Esophagus muscularis mucosa (tissue), 4 donors: ENCODE measurements at regions of chr1 and their contacts with region 1.

Region 1: DNA sequence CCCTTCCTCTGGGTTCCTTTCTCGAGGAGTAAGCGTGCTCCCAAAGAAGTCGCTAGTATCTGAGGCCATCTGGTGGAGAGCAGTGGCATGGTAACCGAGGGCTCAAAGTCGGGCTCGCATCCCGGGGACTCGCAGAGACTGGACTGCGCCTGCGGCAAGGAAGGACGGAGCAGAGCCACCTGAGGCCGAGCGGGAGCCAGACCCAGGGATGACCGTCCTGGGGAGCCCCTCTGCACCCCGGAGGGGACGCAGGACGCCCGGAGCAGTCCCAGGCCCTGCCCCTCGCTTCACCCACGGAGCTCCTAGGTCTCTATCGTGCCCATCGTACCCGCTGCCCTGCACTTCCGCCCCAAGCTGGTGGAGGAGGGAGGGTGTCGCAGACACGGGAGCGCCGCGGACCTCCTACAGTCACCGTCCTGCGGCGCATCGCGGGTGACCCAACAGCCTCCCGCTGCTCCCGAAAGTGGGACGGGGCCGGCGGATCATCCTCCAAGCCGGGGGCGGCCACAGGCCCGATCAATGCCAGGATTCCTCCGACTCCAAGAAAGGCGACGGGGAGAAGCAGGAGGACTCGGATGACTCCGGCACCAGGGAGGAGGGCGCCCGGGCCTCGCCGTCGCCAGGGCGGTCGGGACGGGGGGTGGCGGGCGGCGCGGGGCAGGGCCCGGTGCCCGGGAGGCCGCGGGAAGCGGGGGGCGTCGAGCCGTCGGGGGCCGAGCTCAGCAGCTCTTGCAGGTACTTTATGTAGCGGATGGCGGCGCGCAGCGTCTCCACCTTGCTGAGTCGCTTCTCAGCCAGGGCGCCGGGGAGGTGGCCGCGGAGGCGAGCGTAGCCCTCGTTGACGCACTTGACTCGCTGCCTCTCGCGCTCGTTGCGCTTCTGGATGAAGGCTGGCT is 2.3 kb upstream of the CACNA1S start:
- DNase-seq: peak; percentile 96
- H3K4me3 ChIP-seq: peak overlapping the region; percentile 59 to 73 (median 70)
- H3K27ac ChIP-seq: peak overlapping the region; percentile 15 to 79 (median 68)
- H3K4me1 ChIP-seq: peaks cover 9 to 21% (median 18%) of the 10 kb centered on the region in 4 donors
- H3K27me3 ChIP-seq: peaks cover 0 to 16% (median 2%) of the 10 kb centered on the region in 4 donors
- CTCF ChIP-seq: peak; percentile 81 to 92 (median 83)
- EP300 ChIP-seq: no peak
- POLR2A ChIP-seq: no peak

Region 2: GRCh38 chr1:200971955-200972711 is 142.4 kb before region 1 on chr1:
- intact Hi-C with region 1: loop called (anchors 2 kb)
- DNase-seq: no peak
- H3K4me3 ChIP-seq: no peak overlapping the region
- H3K27ac ChIP-seq: no peak overlapping the region
- H3K4me1 ChIP-seq: peaks cover 0 to 9% (median 8%) of the 10 kb centered on the region in 4 donors
- H3K27me3 ChIP-seq: no peaks in the 10 kb centered on the region
- CTCF ChIP-seq: peak in 2 of 3 experiments; percentile 72 to 93
- EP300 ChIP-seq: no peak
- POLR2A ChIP-seq: no peak

Region 3: GRCh38 chr1:200982071-200982995 is 132.2 kb before region 1 on chr1:
- intact Hi-C with region 1: no loop called
- DNase-seq: no peak
- H3K4me3 ChIP-seq: no peak overlapping the region
- H3K27ac ChIP-seq: no peak overlapping the region
- H3K4me1 ChIP-seq: no peaks in the 10 kb centered on the region
- H3K27me3 ChIP-seq: no peaks in the 10 kb centered on the region
- CTCF ChIP-seq: no peak
- EP300 ChIP-seq: no peak
- POLR2A ChIP-seq: no peak

Region 4: GRCh38 chr1:201088902-201089525 is 25.5 kb before region 1 on chr1:
- intact Hi-C with region 1: loop called (anchors 1 kb)
- DNase-seq: no peak
- H3K4me3 ChIP-seq: no peak overlapping the region
- H3K27ac ChIP-seq: no peak overlapping the region
- H3K4me1 ChIP-seq: no peaks in the 10 kb centered on the region
- H3K27me3 ChIP-seq: peaks cover 0 to 16% (median 0%) of the 10 kb centered on the region in 4 donors
- CTCF ChIP-seq: no peak
- EP300 ChIP-seq: no peak
- POLR2A ChIP-seq: no peak

Region 5: DNA sequence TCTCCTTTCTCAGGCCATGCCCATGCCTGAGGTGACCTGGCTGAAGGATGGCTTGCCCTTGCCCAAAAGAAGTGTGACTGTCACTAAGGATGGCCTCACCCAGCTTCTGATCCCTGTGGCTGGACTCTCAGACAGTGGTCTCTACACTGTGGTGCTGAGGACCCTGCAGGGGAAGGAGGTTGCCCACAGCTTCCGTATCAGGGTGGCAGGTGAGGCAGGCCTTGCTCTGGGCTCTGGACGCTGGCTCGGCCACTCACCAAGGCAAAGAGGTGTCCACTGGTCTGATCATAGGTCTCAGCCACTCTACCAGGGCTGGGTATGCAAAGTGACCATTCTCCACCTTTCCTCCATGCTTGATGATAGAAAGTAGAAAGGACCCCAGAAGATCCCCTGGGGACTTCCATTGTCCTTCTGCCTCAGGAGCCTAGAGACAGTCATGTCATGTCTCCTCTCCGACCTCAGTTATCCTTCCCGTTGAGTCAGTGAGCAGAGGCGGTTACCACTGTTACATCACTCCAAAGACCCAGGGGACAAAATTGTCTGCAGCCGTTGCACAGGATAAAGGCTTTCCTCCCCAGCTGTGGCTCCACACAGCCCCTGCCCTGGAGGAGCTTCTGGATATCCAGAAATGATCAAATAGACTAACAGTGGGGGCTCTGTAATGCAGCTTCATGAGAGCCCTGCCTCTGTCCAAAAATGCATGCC is 110.3 kb after region 1 on chr1:
- intact Hi-C with region 1: loop called (anchors 5 kb)
- DNase-seq: peak; percentile 88
- H3K4me3 ChIP-seq: no peak overlapping the region
- H3K27ac ChIP-seq: no peak overlapping the region
- H3K4me1 ChIP-seq: no peaks in the 10 kb centered on the region
- H3K27me3 ChIP-seq: peaks cover 0 to 14% (median 0%) of the 10 kb centered on the region in 4 donors
- CTCF ChIP-seq: no peak
- EP300 ChIP-seq: no peak
- POLR2A ChIP-seq: no peak

Region 6: DNA sequence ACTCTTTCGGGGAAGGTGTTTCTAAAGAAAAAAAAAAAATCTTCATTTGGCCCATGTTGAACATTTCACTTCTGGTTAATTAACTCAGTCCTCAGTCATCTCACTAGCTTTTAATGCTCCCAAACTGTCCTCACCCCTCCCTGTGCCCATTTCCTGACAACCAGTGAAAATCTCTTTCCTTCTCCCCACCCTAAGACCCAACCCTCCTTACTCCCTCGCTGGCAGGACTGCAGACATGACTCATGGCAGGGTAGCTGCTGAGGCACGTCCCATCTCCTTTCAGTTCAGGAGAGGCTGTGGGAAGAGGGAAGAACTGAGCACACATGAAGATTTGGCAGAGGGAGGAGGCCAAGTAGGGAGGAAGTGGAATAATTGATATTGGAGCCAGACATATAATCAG is 181.4 kb after region 1 on chr1:
- intact Hi-C with region 1: no loop called
- DNase-seq: no peak
- H3K4me3 ChIP-seq: no peak overlapping the region
- H3K27ac ChIP-seq: no peak overlapping the region
- H3K4me1 ChIP-seq: peaks cover 0 to 3% (median 0%) of the 10 kb centered on the region in 4 donors
- H3K27me3 ChIP-seq: peaks cover 0 to 22% (median 0%) of the 10 kb centered on the region in 4 donors
- CTCF ChIP-seq: no peak
- EP300 ChIP-seq: no peak
- POLR2A ChIP-seq: no peak